ENCODE measurements at regions of chr5 and their contacts with region 1.

Region 1: DNA sequence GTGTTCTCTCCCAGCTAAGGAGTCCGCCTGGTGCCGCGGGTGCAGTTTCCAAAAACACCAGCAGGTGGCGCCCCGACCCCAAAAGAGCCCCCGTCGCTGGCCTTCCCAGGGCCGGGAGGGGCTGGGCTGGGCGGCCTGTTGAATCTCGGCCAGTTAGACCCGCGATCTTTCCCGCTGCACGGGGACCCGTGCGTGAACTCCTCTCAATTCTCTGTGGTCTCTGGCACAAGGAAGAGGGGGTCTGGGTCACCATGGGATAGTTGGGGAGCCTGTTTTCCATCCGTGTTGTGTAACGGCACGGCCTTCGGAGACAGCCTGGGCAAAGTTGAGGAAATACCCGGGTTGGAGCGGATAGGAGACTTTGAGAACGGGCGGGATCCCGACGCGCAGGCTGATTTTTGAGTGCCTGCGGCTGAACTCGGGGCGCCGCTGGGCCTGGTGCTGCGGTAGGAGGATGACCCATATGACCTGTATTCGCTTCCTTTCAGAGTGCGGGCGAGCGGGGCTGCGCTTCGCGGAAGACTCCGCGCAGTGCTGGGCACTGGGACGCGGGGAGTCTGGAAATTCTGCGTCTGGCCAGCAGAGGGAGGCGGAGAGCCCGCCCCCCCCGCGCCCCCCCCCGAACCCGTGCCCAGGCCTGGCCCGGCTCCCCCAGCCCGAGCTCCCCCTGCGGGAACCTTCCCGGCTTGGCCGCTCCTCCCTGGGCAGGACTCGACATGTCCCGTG is 7.9 kb upstream of the PSD2 start:
- DNase-seq: peak; percentile 67
- H3K4me3 ChIP-seq: peak overlapping the region; percentile 30
- H3K27ac ChIP-seq: no peak overlapping the region
- H3K4me1 ChIP-seq: no peaks in the 10 kb centered on the region
- CTCF ChIP-seq: peak; percentile 94

Region 2: DNA sequence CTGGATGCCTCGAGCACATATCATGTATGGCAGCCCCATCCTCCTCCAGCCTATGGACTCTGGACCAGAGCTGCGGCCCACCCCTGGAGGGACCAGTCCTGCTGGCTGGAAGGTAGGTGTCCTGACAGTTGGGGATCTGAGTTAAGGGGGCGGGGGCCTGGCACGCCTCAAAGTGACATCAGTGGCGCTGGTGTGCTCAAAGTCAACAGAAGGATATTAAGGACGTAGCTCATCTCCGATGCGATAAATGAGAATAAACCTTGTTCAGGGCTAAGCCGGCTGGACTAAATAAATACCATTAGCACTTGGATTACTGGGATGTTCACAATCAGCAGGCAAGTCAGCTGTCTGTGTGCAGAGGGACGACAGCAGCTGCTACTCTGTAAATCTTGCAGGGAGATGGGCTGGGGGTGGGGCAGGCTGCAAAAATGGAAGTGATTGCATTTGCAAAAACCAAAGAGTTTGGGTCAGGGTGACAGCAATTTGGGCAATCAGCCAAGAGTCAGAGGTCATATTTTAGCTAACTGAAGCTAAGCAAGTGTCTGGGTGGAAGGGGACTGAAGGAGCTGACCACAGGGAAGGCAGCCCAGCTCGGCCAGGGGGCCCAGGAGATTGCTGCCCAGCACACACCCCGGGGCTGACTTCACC is 832.6 kb before region 1 on chr5:
- CTCF ChIA-PET with region 1: no interaction called
- POLR2A ChIA-PET with region 1: no interaction called
- intact Hi-C with region 1: no loop called
- DNase-seq: no peak
- H3K4me3 ChIP-seq: no peak overlapping the region
- H3K27ac ChIP-seq: no peak overlapping the region
- H3K4me1 ChIP-seq: no peaks in the 10 kb centered on the region
- CTCF ChIP-seq: no peak

Region 3: DNA sequence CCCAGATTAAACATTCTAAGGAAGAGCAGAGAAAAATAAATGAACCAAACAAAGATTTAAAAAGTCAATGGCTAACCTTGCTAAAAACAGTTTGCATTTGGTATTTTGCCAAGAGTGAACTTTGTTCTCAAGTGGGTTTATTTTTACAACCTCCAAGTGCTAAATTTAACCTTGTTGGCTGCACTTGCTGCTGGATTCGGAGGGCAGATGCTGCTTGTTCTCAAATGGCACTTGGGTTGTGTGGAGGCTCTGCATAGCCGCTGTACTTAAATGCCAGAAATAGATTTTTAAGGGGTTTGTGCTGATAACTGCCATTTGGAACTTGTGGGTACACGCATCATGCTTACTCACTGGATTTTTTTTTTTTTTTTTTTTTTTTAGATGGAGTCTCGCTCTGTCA is 370.5 kb before region 1 on chr5:
- CTCF ChIA-PET with region 1: no interaction called
- POLR2A ChIA-PET with region 1: no interaction called
- intact Hi-C with region 1: no loop called
- DNase-seq: no peak
- H3K4me3 ChIP-seq: no peak overlapping the region
- H3K27ac ChIP-seq: no peak overlapping the region
- H3K4me1 ChIP-seq: no peaks in the 10 kb centered on the region
- CTCF ChIP-seq: no peak

Region 4: DNA sequence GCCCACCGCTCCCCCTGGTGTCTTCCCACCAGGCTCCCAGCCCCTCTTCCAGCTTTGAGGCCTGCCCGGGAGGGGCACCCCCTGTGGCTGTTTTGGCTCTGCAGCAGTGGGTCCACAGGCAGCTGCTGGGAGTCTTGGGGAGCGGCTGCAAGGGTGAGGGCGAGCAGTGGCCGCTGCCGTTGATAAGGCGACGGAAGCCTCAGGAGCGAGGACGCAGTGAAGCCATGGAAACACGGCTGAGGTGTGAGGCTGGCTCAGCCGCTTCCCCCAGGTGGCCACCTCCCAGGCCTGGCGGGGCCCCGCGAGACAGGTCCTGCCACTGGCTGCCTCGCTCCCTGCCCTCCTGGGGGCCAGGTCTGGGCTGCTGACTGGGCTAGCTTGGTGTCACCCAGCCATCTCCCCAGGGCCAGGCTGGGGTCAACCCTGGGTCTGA is 98.1 kb before region 1 on chr5:
- CTCF ChIA-PET with region 1: no interaction called
- POLR2A ChIA-PET with region 1: no interaction called
- intact Hi-C with region 1: no loop called
- DNase-seq: peak; percentile 51
- H3K4me3 ChIP-seq: peak overlapping the region; percentile 28
- H3K27ac ChIP-seq: peak overlapping the region; percentile 90
- H3K4me1 ChIP-seq: peaks cover 61% of the 10 kb centered on the region
- CTCF ChIP-seq: no peak

Region 5: GRCh38 chr5:139808493-139809139 is 20.9 kb after region 1 on chr5:
- CTCF ChIA-PET with region 1: no interaction called
- POLR2A ChIA-PET with region 1: no interaction called
- intact Hi-C with region 1: no loop called
- DNase-seq: peak; percentile 21
- H3K4me3 ChIP-seq: no peak overlapping the region
- H3K27ac ChIP-seq: no peak overlapping the region
- H3K4me1 ChIP-seq: no peaks in the 10 kb centered on the region
- CTCF ChIP-seq: no peak

Region 6: DNA sequence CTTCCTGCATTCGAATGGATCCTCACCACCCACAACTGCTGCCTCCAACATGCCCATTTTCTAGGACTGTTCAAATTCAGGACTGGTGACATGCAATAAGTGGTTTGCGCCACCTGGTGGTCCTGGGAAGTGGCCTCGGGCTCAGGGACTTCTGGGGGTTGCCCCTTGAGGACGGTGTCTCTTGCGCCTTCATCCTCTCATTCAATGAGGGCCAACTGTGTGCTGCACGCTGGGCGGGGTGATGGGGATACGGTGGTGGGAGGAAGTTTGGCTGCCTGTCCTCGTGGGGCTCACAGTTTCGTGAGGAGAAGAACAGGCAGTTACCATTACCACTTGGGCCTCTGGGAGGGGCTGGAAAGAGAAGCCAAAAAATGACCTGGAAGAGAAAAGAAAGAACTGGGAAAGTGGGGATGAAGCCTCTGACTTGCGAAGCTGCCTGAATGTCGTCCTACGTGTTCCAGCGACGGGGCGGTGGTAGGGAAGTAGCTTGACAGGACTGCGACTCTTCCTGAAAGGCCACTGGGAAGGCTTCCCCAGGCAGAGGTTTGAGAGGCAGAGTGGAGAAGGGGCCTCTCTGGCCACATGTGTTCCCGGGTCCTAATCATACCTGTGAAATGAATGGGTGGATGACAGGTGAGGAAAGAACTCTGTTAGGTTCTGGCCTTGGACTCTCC is 56.9 kb after region 1 on chr5:
- CTCF ChIA-PET with region 1: no interaction called
- POLR2A ChIA-PET with region 1: no interaction called
- intact Hi-C with region 1: loop called (anchors 1 kb)
- DNase-seq: peak; percentile 80
- H3K4me3 ChIP-seq: no peak overlapping the region
- H3K27ac ChIP-seq: no peak overlapping the region
- H3K4me1 ChIP-seq: no peaks in the 10 kb centered on the region
- CTCF ChIP-seq: peak; percentile 91

Region 7: GRCh38 chr5:139863855-139864558 is 76.3 kb after region 1 on chr5:
- CTCF ChIA-PET with region 1: interaction called, 4 read pairs
- POLR2A ChIA-PET with region 1: no interaction called
- intact Hi-C with region 1: loop called (anchors 1 kb)
- DNase-seq: peak; percentile 59
- H3K4me3 ChIP-seq: no peak overlapping the region
- H3K27ac ChIP-seq: no peak overlapping the region
- H3K4me1 ChIP-seq: no peaks in the 10 kb centered on the region
- CTCF ChIP-seq: peak; percentile 82

Region 8: GRCh38 chr5:139968547-139969261 is 181.0 kb after region 1 on chr5:
- CTCF ChIA-PET with region 1: interaction called, 13 read pairs
- POLR2A ChIA-PET with region 1: no interaction called
- intact Hi-C with region 1: loop called (anchors 2 kb)
- DNase-seq: peak; percentile 78
- H3K4me3 ChIP-seq: no peak overlapping the region
- H3K27ac ChIP-seq: no peak overlapping the region
- H3K4me1 ChIP-seq: no peaks in the 10 kb centered on the region
- CTCF ChIP-seq: peak; percentile 98

Measured in OCI-LY7 (cell line).